ENCODE measurements at regions of chr5 and their contacts with region 1.

Region 1: DNA sequence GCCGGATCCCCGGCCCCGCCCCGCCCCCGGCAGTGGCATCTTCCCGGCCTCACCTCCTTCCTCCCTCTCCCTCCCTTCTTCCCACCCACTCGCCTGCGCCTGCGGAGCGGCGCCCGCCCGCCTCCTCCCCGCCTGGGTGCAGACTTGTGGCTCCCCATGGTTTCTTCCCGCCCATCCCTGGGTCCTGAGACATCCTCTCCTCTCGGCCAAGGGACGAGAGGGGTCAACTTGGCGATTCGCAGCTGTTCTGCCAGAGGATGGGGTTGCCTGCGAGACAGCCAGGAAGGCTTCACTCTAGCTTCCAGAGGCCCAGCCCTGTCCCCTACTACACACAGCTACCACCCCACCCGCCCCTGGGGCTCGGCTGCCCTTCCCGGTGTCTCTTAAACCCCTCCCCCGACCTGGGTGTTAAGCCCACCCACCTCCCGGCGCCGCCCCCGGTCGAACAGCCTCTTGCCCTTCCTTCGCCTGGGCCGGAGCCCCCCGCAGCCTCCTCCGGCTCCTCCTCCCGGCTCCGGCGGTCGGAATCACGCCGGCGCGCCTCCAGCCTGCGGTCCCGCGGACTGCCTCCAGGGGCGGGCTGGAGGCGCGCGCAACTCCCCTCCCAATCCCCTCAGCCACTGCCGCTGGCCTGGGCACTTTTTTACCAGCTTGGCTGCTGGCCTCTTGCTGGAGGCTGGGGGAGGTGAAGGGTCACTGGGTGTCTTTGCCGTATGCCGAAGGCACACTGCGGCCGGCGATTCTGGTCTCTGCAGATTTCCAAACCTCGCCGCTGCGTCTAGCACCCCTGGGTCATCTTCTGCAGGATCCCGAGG is 1.9 kb downstream of the JADE2 start:
- DNase-seq: peak; percentile 81
- H3K4me3 ChIP-seq: peak overlapping the region; percentile 66 to 86 (median 84)
- H3K27ac ChIP-seq: peak overlapping the region; percentile 94 to 99 (median 98)
- H3K4me1 ChIP-seq: peaks cover 16 to 53% (median 40%) of the 10 kb centered on the region in 4 donors
- H3K27me3 ChIP-seq: no peaks in the 10 kb centered on the region
- CTCF ChIP-seq: peak; percentile 95 to 97 (median 96)
- EP300 ChIP-seq: no peak
- POLR2A ChIP-seq: peak; percentile 22

Region 2: GRCh38 chr5:134370871-134371833 is 156.2 kb before region 1 on chr5 and contains the start of gene UBE2B:
- in situ Hi-C with region 1: no loop called
- intact Hi-C with region 1: loop called (anchors 5 kb)
- DNase-seq: peak; percentile 98
- H3K4me3 ChIP-seq: peak within 1 kb of the TSS; percentile 61 to 98 (median 93)
- H3K27ac ChIP-seq: peak within 1 kb of the TSS; percentile 99
- H3K4me1 ChIP-seq: peaks cover 5 to 40% (median 30%) of the 10 kb centered on the region in 4 donors
- H3K27me3 ChIP-seq: no peaks in the 10 kb centered on the region
- CTCF ChIP-seq: no peak
- EP300 ChIP-seq: peak; percentile 63
- POLR2A ChIP-seq: peak; percentile 83
- total RNA-seq, gene UBE2B: 51.1 to 126 (median 71.6) TPM

Region 3: DNA sequence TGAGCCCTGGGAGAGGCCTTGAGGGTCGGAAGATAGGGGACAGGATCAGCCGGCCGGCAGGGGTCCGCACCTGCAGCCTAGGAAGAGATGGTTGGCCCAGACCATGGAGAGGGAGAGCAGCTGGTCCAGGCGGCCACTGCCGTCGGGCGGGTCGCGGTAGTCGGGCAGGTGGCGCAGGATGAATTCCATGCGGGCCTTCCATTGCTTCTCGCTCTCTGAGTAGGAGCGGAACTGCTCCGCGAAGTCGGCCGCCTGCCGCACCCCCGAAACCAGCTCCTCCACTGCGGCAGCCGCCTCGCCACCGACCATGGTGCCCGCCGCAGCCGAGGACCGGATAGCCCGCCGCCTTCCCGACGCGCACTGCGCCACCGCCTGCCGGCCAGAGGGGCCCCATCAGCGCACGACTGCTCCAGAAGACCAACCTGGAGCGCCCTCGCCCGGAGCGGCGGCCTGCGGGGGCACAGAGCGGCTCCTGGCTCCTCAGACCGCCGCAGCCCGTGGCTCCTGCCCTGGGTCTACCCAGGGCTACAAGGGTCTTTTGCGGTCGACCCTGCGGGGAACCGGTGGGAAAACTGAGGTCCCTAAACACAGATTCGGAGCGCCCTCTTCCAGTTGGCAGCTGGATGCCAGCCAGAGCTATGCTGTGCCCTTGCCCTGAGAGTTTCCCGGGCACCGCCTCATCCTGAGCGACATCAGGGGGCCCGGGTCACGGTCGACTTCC is 115.6 kb before region 1 on chr5 and contains the start of gene CDKN2AIPNL:
- in situ Hi-C with region 1: loop called in 3 of 4 experiments (anchors 10 to 25 kb)
- intact Hi-C with region 1: loop called (anchors 5 kb)
- DNase-seq: peak; percentile 94
- H3K4me3 ChIP-seq: peak within 1 kb of the TSS; percentile 47 to 88 (median 76)
- H3K27ac ChIP-seq: peak within 1 kb of the TSS; percentile 79 to 90 (median 86)
- H3K4me1 ChIP-seq: peaks cover 10 to 47% (median 33%) of the 10 kb centered on the region in 4 donors
- H3K27me3 ChIP-seq: no peaks in the 10 kb centered on the region
- CTCF ChIP-seq: peak; percentile 65 to 93 (median 72)
- EP300 ChIP-seq: no peak
- POLR2A ChIP-seq: peak; percentile 76
- total RNA-seq, gene CDKN2AIPNL: 3.2 to 18.7 (median 12.9) TPM in 3 of 4 donors, not detected in the other

Region 4: DNA sequence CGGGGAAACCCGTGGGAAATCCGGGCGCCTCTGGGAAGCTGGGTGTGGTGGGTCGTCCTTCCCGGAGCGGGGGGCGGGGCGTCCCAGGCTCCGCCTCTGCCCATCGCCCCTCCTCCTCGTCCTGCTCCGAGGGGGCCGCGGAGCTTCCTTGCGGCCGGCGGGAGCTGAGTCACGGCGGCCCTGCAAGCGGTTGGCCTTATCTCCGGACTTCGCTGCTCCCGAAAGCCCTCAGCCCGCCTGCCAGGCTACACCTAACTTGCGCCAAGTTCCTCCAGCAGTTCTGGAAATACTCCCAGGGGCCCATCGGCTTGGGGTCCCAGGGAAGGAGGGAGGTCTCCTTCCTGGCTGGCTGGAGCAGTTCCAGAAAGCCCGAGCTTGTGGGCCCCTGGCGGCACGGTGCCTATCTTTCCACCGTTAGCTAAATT is 61.5 kb before region 1 on chr5:
- in situ Hi-C with region 1: no loop called
- intact Hi-C with region 1: loop called (anchors 1 kb)
- DNase-seq: peak; percentile 94
- H3K4me3 ChIP-seq: peak overlapping the region; percentile 42 to 64 (median 49)
- H3K27ac ChIP-seq: peak overlapping the region; percentile 94 to 100 (median 100)
- H3K4me1 ChIP-seq: peaks cover 14 to 32% (median 26%) of the 10 kb centered on the region in 4 donors
- H3K27me3 ChIP-seq: no peaks in the 10 kb centered on the region
- CTCF ChIP-seq: peak in 2 of 5 experiments; percentile 7 to 40
- EP300 ChIP-seq: no peak
- POLR2A ChIP-seq: peak; percentile 87

Measured in transverse colon (tissue), 4 donors.